ENCODE measurements at regions of chr12 and their contacts with region 1.

Region 1: GRCh38 chr12:44930972-44931600 is 55.0 kb upstream of the NELL2 start:
- DNase-seq: peak; percentile 31
- CTCF ChIP-seq: peak; percentile 56

Region 2: GRCh38 chr12:44015335-44015941 is 915.6 kb before region 1 on chr12:
- in situ Hi-C with region 1: loop called (anchors 25 kb)
- DNase-seq: peak; percentile 31
- CTCF ChIP-seq: peak; percentile 61

Region 3: GRCh38 chr12:44827832-44828438 is 103.2 kb before region 1 on chr12:
- in situ Hi-C with region 1: no loop called
- DNase-seq: no peak
- CTCF ChIP-seq: no peak

Measured in GM13977 (cell line).